ENCODE measurements at regions of chr18 and their contacts with region 1.

Region 1: DNA sequence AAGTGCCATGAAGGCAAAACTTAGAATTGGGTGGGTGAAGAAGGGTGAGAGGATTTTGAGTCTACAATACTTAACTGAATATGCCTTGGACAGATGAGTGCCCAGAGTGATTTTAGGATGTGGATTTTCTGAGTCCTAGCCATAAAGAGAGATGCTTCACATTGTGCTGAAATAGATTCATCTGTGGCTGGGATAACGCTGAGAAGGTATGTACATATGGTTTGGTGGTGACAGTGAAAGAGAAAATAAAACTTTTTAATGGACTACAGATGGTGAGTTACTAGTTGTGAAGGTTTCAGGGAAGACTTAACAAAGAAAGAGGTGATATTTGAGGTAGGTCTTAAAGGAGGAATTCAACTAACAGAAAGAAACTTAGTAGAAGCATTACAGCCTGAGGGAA is 265.8 kb downstream of the AKAIN1 start:
- DNase-seq: no peak
- H3K4me3 ChIP-seq: no peak overlapping the region
- H3K27ac ChIP-seq: no peak overlapping the region
- H3K4me1 ChIP-seq: no peaks in the 10 kb centered on the region
- CTCF ChIP-seq: no peak

Region 2: GRCh38 chr18:4854671-4855070 is 76.5 kb before region 1 on chr18:
- CTCF ChIA-PET with region 1: no interaction called
- POLR2A ChIA-PET with region 1: no interaction called
- intact Hi-C with region 1: loop called (anchors 10 kb)
- DNase-seq: no peak
- H3K4me3 ChIP-seq: no peak overlapping the region
- H3K27ac ChIP-seq: no peak overlapping the region
- H3K4me1 ChIP-seq: no peaks in the 10 kb centered on the region
- CTCF ChIP-seq: no peak